ENCODE measurements at regions of chr13 and their contacts with region 1.

Region 1: DNA sequence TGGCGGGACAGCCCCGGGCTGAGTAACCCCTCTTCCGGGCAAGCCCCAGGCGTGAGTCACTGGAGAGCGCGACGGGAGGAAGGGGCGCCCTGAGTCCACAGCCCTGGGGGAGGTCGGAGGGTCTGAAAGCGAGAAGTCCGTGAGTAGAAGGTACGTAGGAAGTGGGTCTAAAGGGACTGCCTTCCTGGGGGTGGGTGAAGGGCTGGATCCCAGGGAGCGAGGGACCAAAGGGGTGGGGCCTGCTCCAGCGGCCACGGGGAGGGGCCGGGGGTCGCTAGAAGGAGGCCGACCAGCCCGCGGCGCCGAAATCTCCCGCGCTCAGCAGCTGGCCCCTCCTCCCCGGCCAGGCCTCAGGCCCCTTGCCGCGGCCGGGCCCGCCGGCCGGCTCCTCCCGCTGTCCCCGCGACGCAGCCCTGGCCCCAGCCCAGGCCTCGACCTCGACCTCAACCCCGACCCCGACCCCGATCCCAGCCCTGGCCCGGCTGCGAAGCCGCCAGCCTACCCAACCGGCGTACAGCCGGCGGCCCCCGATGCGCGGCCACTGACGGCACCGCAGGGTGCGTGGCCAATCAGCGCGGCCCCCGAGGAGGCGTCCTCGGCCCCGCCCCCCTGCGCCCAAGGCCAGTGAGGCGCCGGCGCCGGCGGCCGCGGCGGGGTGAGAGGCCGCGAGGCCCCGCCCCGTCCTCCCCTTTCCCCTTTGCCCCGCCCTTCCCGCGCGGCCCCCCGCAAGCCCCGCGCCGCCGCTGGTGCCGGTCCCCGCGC is 22.6 kb downstream of the IPO5 start:
- DNase-seq: peak; percentile 74 to 95 (median 88)
- H3K4me3 ChIP-seq: peak overlapping the region; percentile 63 to 97 (median 87)
- H3K27ac ChIP-seq: peak overlapping the region; percentile 23 to 98 (median 90)
- H3K27me3 ChIP-seq: no peaks in the 10 kb centered on the region
- CTCF ChIP-seq: peak in 5 of 56 donors; percentile 7 to 30 (median 20)

Region 2: GRCh38 chr13:97372936-97373335 is 603.1 kb before region 1 on chr13:
- intact Hi-C with region 1: loop called in 1 of 2 experiments (anchors 10 kb)
- DNase-seq: peak in 2 of 10 donors; percentile 36 to 45
- H3K4me3 ChIP-seq: no peak overlapping the region
- H3K27ac ChIP-seq: peak overlapping the region; percentile 13 to 87 (median 76)
- H3K27me3 ChIP-seq: no peaks in the 10 kb centered on the region
- CTCF ChIP-seq: no peak

Region 3: DNA sequence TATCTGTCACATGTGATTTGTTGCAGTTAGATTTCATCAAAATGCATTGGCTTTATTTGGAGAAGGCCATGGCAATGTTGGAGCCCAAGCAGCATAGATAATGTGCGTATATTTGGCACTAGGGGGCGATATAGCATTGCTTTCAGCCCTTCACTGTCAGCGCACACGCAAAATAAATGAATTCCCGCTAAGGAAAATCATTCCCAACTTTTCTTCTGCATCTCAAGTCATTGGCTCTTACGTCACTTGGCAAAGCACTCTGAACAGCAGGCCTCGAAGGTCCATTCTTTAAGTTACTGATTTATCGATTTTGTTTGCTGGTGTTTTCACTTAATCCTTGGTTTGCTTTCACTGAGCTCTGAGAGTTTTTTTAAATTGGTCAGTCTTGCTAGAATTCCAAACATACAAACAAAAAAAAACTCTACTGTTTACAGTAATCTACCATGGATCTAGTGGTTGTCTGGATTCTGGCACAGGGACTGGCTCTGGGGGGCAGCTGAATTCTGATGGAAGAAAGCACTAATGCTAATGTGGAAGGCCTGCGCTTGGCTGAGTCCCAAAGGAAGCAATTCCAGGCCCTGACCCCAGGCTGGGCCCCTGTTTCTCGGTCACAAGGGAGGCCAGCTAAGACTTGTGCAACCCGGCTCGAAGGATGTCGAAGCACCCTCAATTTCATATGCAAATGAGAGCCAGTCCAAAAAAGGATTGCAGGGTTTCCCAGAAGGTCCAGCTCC is 120.3 kb before region 1 on chr13:
- intact Hi-C with region 1: loop called (anchors 2 kb)
- DNase-seq: peak in 5 of 10 donors; percentile 20 to 51 (median 41)
- H3K4me3 ChIP-seq: peak overlapping the region in 9 of 59 donors; percentile 3 to 33 (median 21)
- H3K27ac ChIP-seq: peak overlapping the region in 3 of 59 donors; percentile 24 to 38 (median 29)
- H3K27me3 ChIP-seq: peaks cover 0 to 6% (median 0%) of the 10 kb centered on the region in 45 donors
- CTCF ChIP-seq: peak; percentile 80 to 95 (median 88)

Region 4: GRCh38 chr13:98022210-98022609 is 46.2 kb after region 1 on chr13:
- intact Hi-C with region 1: loop called in 1 of 2 experiments (anchors 5 kb)
- DNase-seq: peak in 3 of 10 donors; percentile 45 to 73 (median 57)
- H3K4me3 ChIP-seq: no peak overlapping the region
- H3K27ac ChIP-seq: peak overlapping the region in 29 of 59 donors; percentile 2 to 77 (median 41)
- H3K27me3 ChIP-seq: no peaks in the 10 kb centered on the region
- CTCF ChIP-seq: peak in 2 of 56 donors; percentile 4 to 14

Region 5: DNA sequence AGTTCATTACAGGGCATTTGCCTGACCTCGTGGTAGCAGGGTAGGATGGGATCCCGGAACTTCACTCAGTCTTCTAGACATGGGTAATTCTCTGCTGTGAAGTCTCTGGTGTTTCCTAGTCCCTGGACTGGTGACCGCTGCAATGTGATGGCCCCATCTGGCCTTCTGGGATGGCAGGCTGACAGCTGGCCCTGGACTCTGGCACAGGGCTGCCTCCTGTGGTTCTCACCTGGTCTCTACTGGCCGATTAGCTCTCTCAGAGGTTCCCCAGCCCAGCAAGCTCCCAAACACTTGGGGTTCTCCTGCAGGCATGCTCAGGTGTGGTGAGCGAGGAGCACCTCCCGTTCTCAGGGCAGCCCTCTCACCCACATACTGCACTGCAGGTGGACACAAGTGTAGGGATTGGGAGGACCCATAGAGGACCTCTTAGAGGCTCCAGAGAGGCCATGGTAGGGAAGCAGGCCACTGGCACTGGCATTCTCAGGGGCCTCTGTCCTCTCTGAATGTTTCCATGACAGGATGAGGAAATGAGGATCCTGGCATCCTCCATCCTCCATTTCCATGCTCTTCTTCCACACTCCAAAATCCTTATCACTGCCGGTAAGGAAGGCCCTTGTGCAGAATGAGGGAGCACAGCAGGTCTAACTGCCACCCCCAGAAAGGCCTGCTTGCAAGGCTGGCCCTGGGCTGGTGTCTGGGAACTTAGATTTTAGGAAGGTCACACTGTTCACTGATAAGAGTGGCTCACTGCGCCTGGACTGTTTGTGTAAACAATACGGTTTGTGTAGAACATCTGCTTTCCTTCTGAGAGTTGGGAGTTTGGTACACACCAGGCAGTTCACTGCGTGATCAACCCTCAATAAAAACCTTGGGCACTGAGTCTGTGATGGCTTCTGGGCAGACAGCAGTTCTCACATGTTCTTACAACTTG is 135.4 kb after region 1 on chr13:
- intact Hi-C with region 1: no loop called
- DNase-seq: no peak
- H3K4me3 ChIP-seq: no peak overlapping the region
- H3K27ac ChIP-seq: no peak overlapping the region
- H3K27me3 ChIP-seq: peaks cover 0 to 4% (median 0%) of the 10 kb centered on the region in 45 donors
- CTCF ChIP-seq: no peak